ENCODE measurements at regions of chr14 and their contacts with region 1.

Region 1: DNA sequence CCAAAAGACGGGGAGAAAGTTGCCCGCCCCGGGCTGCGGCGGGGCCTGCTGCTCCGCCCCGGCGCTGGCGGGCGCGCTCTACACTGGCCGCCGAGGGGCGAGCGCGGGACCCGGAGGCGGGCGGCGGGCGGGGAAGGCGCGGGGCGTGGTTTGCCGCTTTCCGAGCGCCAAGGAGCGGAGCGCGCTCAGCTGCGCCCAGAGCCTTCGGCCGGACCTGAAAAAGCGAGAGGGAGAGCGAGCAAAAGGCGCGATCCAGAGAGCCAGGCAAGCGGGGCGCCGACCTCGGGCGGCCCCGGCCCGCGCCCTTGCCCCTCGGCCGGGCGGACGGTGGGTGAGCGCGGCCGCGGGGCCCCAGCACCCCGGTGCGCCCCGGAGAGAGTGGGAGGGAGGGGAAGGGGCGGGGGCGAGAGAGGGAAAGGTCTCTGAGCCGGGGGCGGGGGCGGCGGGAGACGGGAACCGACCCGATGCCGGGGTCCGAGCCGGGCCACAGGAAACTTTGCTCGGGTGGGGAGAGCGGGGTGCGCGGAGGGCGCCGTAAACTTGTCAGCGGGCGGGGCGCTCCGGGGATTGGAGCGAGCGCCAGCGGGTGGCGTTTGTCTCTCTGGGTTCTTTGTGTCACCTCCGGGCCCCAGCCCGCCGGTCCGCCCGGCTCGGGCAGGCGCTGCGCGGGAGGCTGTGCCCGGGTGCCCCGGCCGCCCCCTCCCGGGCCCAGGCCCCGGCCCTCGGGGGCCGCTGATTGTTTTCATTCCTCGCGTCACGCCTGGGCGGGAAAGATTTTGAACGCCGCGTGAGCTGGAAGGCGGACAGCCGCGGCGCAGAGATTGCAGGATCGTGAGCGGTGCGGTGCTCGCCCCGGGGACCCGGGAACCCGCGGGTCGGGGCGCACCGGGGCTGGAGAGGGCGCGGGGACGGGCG is at the start of gene SYNE2:
- DNase-seq: no peak
- H3K4me3 ChIP-seq: peak within 1 kb of the TSS; percentile 69 to 96 (median 88)
- H3K27ac ChIP-seq: peak within 1 kb of the TSS; percentile 88 to 98 (median 95)
- H3K4me1 ChIP-seq: peaks cover 0 to 49% (median 24%) of the 10 kb centered on the region in 3 donors
- H3K27me3 ChIP-seq: no peaks in the 10 kb centered on the region
- CTCF ChIP-seq: peak in 4 of 6 experiments; percentile 26 to 54 (median 44)
- POLR2A ChIP-seq: peak in 1 of 4 donors; percentile 76
- total RNA-seq, gene SYNE2: 128 to 197 (median 145) TPM

Region 2: GRCh38 chr14:63986789-63987533 is 133.9 kb after region 1 on chr14:
- intact Hi-C with region 1: loop called (anchors 10 kb)
- DNase-seq: no peak
- H3K4me3 ChIP-seq: no peak overlapping the region
- H3K27ac ChIP-seq: peak overlapping the region in 1 of 4 donors; percentile 39
- H3K4me1 ChIP-seq: peaks cover 0 to 10% (median 1%) of the 10 kb centered on the region in 3 donors
- H3K27me3 ChIP-seq: no peaks in the 10 kb centered on the region
- CTCF ChIP-seq: no peak
- POLR2A ChIP-seq: no peak